Vagina (tissue), 2 donors: ENCODE measurements at regions of chr5 and their contacts with region 1.

Region 1: GRCh38 chr5:35926389-35927051 is 11.9 kb downstream of the CAPSL start:
- DNase-seq: no peak
- H3K4me3 ChIP-seq: peak overlapping the region; percentile 11 to 25
- H3K27ac ChIP-seq: peak overlapping the region; percentile 2
- H3K4me1 ChIP-seq: peaks cover 8% of the 10 kb centered on the region
- H3K27me3 ChIP-seq: no peaks in the 10 kb centered on the region
- CTCF ChIP-seq: peak; percentile 59 to 92 (median 86)
- POLR2A ChIP-seq: no peak

Region 2: GRCh38 chr5:35089334-35090314 is 836.9 kb before region 1 on chr5:
- intact Hi-C with region 1: loop called (anchors 5 kb)
- DNase-seq: no peak
- H3K4me3 ChIP-seq: no peak overlapping the region
- H3K27ac ChIP-seq: no peak overlapping the region
- H3K4me1 ChIP-seq: peaks cover 29% of the 10 kb centered on the region
- H3K27me3 ChIP-seq: no peaks in the 10 kb centered on the region
- CTCF ChIP-seq: peak in 2 of 3 experiments; percentile 56 to 62
- POLR2A ChIP-seq: no peak

Region 3: GRCh38 chr5:35777358-35778087 is 149.0 kb before region 1 on chr5:
- intact Hi-C with region 1: loop called (anchors 10 kb)
- DNase-seq: no peak
- H3K4me3 ChIP-seq: no peak overlapping the region
- H3K27ac ChIP-seq: no peak overlapping the region
- H3K4me1 ChIP-seq: peaks cover 9% of the 10 kb centered on the region
- H3K27me3 ChIP-seq: no peaks in the 10 kb centered on the region
- CTCF ChIP-seq: peak in 1 of 3 experiments; percentile 42
- POLR2A ChIP-seq: no peak